A549 (cell line): ENCODE measurements at regions of chr20 and their contacts with region 1.

Region 1: DNA sequence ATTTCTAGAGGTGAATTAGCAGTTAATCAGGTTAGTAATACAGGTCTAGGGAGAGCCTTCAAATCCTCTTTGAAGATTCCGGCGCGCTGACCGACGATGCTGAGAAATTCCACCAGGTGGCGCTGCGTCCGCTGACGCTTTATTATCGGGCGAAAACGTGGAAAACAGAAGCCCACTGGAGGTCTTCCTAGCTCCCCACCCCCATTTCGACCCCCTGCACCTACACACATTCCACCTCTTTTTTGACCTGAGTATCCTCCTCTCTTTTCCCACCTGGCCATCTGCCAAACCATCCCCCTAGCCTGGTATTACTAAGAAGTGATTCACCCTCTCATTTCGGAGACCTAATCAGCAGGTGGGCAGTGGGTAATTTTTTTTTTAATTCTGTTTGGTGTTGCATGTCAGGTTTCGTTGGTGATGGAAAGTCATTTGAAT is 65.4 kb upstream of the RIN2 start:
- DNase-seq: peak; percentile 61 to 71
- ATAC-seq: peak in 1 of 2 experiments; percentile 67; a peak in 3 of 6 replicates
- H3K4me3 ChIP-seq: peak overlapping the region; percentile 10; the same call in 1 of the 3 replicates
- H3K27ac ChIP-seq: peak overlapping the region; percentile 37 to 79
- H3K4me1 ChIP-seq: peaks cover 25% of the 10 kb centered on the region
- CTCF ChIP-seq: peak; percentile 98
- EP300 ChIP-seq: no peak
- POLR2A ChIP-seq: no peak
- RAD21 ChIP-seq: peak; percentile 92

Region 2: GRCh38 chr20:19673575-19673974 is 19.1 kb before region 1 on chr20:
- CTCF ChIA-PET with region 1: interaction called, 11 read pairs
- POLR2A ChIA-PET with region 1: no interaction called
- DNase-seq: no peak
- ATAC-seq: no peak; a peak in 1 of 6 replicates
- H3K4me3 ChIP-seq: no peak overlapping the region
- H3K27ac ChIP-seq: no peak overlapping the region
- H3K4me1 ChIP-seq: no peaks in the 10 kb centered on the region
- CTCF ChIP-seq: no peak
- EP300 ChIP-seq: no peak
- POLR2A ChIP-seq: no peak
- RAD21 ChIP-seq: no peak

Region 3: GRCh38 chr20:19706463-19706862 is 13.8 kb after region 1 on chr20:
- CTCF ChIA-PET with region 1: interaction called, 22 read pairs
- POLR2A ChIA-PET with region 1: no interaction called
- DNase-seq: no peak
- ATAC-seq: no peak
- H3K4me3 ChIP-seq: no peak overlapping the region
- H3K27ac ChIP-seq: no peak overlapping the region
- H3K4me1 ChIP-seq: peaks cover 18% of the 10 kb centered on the region
- CTCF ChIP-seq: no peak
- EP300 ChIP-seq: no peak
- POLR2A ChIP-seq: no peak
- RAD21 ChIP-seq: no peak

Region 4: DNA sequence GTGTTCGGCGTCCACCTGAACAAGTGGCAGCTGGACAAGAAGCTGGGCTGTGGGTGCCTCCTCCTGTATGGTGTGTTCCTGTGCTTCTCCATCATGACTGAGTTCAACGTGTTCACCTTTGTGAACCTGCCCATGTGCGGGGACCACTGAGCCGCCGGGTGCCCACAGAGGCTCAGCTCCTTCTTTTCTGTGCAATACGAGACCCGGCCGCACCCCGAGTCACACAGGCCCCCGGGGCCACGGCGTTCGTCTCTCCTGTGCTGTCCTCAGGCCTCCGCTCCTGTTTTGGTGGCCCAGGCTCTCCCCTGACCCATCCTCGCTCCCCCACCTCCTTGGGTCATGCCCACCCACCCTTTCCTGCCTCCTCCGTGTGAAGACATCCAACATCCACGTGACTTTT is 28.3 kb after region 1 on chr20:
- CTCF ChIA-PET with region 1: interaction called, 17 read pairs
- POLR2A ChIA-PET with region 1: no interaction called
- DNase-seq: no peak
- ATAC-seq: no peak
- H3K4me3 ChIP-seq: no peak overlapping the region
- H3K27ac ChIP-seq: no peak overlapping the region
- H3K4me1 ChIP-seq: 0 out of 3 replicates have a peak, but pooled peaks cover under 1% of the 10 kb centered on the region
- CTCF ChIP-seq: no peak
- EP300 ChIP-seq: no peak
- POLR2A ChIP-seq: no peak
- RAD21 ChIP-seq: no peak

Region 5: GRCh38 chr20:19889011-19889953 is 196.6 kb after region 1 on chr20:
- CTCF ChIA-PET with region 1: interaction called, 37 read pairs
- POLR2A ChIA-PET with region 1: interaction called, 5 read pairs
- DNase-seq: peak in 1 of 2 experiments; percentile 48
- ATAC-seq: 0 out of 6 replicates have a peak, but pooled peaks of 1 of the 2 experiments have one; percentile 9
- H3K4me3 ChIP-seq: peak overlapping the region; percentile 31; the same call in 2 of the 3 replicates
- H3K27ac ChIP-seq: peak overlapping the region; percentile 92 to 97
- H3K4me1 ChIP-seq: peaks cover 61% of the 10 kb centered on the region
- CTCF ChIP-seq: no peak
- EP300 ChIP-seq: no peak
- POLR2A ChIP-seq: no peak
- RAD21 ChIP-seq: no peak

Region 6: GRCh38 chr20:19995220-19995863 is 302.6 kb after region 1 on chr20:
- CTCF ChIA-PET with region 1: interaction called, 17 read pairs
- POLR2A ChIA-PET with region 1: no interaction called
- DNase-seq: peak; percentile 55 to 61
- ATAC-seq: no peak
- H3K4me3 ChIP-seq: no peak overlapping the region
- H3K27ac ChIP-seq: peak overlapping the region; percentile 90 to 93
- H3K4me1 ChIP-seq: peaks cover 51% of the 10 kb centered on the region
- CTCF ChIP-seq: peak; percentile 94
- EP300 ChIP-seq: no peak
- POLR2A ChIP-seq: no peak
- RAD21 ChIP-seq: peak; percentile 92 to 93

Region 7: GRCh38 chr20:20353576-20353975 is 660.9 kb after region 1 on chr20:
- CTCF ChIA-PET with region 1: no interaction called
- POLR2A ChIA-PET with region 1: no interaction called
- DNase-seq: no peak
- ATAC-seq: no peak
- H3K4me3 ChIP-seq: no peak overlapping the region
- H3K27ac ChIP-seq: no peak overlapping the region
- H3K4me1 ChIP-seq: no peaks in the 10 kb centered on the region
- CTCF ChIP-seq: no peak
- EP300 ChIP-seq: no peak
- POLR2A ChIP-seq: no peak
- RAD21 ChIP-seq: no peak